ENCODE measurements at regions of chrX and their contacts with region 1.

Region 1: DNA sequence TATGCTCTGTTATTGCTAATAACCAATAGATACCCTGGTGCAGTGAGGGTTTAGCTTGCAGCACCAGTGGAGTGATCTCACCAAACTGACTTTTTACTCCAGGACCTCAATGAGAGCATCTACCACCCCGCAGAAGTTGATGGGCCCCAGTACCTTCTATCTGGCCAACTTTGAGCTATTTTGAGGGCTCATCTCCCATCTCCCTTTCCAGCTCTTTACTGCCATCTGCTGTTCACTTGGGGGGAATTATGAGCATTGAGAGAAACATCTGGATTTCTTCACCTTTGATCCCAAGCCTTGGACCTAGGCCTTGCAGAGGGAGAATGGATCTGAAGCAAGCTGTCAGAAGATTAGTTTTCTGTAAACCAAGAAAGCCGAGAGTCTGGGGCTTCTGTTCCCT is 143.6 kb downstream of the TMEM164 start:
- H3K4me3 ChIP-seq: no peak overlapping the region
- H3K27ac ChIP-seq: no peak overlapping the region
- H3K4me1 ChIP-seq: no peaks in the 10 kb centered on the region
- CTCF ChIP-seq: 0 out of 2 replicates have a peak, but pooled peaks have one; percentile 8

Region 2: GRCh38 chrX:109911046-109911445 is 235.5 kb before region 1 on chrX:
- CTCF ChIA-PET with region 1: interaction called, 50 read pairs
- POLR2A ChIA-PET with region 1: no interaction called
- H3K4me3 ChIP-seq: no peak overlapping the region
- H3K27ac ChIP-seq: no peak overlapping the region
- H3K4me1 ChIP-seq: no peaks in the 10 kb centered on the region
- CTCF ChIP-seq: no peak; the same call in 1 of the 2 replicates

Region 3: DNA sequence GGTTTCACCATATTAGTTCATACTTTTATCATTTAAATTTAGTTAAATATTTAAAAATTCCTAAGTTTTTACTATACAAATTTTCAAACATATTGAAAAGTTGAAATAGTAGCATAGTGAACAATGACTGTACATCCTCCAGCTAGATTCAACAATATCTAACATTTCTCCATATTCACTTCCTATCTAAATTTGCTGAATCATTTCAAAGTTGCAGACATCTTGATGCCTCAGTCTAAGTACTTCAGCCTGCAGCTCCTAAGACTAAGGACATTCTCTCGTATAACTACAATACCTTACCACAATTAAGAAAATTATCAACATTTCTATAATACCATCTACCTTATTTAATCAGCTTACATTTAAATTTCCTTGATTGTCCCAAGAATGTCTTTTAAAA is 10.9 kb before region 1 on chrX:
- CTCF ChIA-PET with region 1: interaction called, 22 read pairs
- POLR2A ChIA-PET with region 1: no interaction called
- H3K4me3 ChIP-seq: no peak overlapping the region
- H3K27ac ChIP-seq: no peak overlapping the region
- H3K4me1 ChIP-seq: no peaks in the 10 kb centered on the region
- CTCF ChIP-seq: no peak

Region 4: GRCh38 chrX:110412971-110413721 is 266.6 kb after region 1 on chrX:
- CTCF ChIA-PET with region 1: interaction called, 576 read pairs
- POLR2A ChIA-PET with region 1: no interaction called
- H3K4me3 ChIP-seq: no peak overlapping the region; the same call in 1 of the 2 replicates
- H3K27ac ChIP-seq: no peak overlapping the region
- H3K4me1 ChIP-seq: no peaks in the 10 kb centered on the region
- CTCF ChIP-seq: peak; percentile 90

Measured in HEK293 (cell line).